ENCODE measurements at regions of chr4 and their contacts with region 1.

Region 1: DNA sequence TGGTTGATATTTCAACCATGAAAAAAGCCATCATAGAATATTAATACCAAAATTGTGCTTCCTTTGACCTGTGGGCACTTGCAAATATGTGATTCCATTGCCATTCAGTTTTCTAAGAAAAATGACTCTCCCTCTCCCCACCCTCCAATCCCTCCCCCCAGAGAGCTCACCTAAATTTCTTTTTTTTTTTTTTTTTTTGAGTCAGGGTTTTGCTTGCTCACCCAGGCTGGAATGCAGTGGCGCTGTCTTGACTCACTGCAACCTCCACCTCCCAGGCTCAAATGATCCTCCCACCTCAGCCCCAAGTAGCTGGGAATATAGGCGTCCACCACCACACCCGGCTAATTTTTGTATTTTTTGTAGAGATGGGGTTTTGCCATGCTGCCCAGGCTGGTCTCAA is 47.0 kb downstream of the SNX25 start:
- DNase-seq: peak in 1 of 2 experiments; percentile 39
- H3K4me3 ChIP-seq: no peak overlapping the region
- H3K27ac ChIP-seq: no peak overlapping the region
- H3K4me1 ChIP-seq: 0 out of 2 replicates have a peak, but pooled peaks cover 5% of the 10 kb centered on the region
- H3K27me3 ChIP-seq: no peaks in the 10 kb centered on the region
- CTCF ChIP-seq: no peak

Region 2: GRCh38 chr4:184583738-184584502 is 672.5 kb before region 1 on chr4:
- CTCF ChIA-PET with region 1: no interaction called
- POLR2A ChIA-PET with region 1: no interaction called
- intact Hi-C with region 1: no loop called
- DNase-seq: no peak
- H3K4me3 ChIP-seq: no peak overlapping the region
- H3K27ac ChIP-seq: no peak overlapping the region
- H3K4me1 ChIP-seq: no peaks in the 10 kb centered on the region
- H3K27me3 ChIP-seq: no peaks in the 10 kb centered on the region
- CTCF ChIP-seq: no peak

Region 3: DNA sequence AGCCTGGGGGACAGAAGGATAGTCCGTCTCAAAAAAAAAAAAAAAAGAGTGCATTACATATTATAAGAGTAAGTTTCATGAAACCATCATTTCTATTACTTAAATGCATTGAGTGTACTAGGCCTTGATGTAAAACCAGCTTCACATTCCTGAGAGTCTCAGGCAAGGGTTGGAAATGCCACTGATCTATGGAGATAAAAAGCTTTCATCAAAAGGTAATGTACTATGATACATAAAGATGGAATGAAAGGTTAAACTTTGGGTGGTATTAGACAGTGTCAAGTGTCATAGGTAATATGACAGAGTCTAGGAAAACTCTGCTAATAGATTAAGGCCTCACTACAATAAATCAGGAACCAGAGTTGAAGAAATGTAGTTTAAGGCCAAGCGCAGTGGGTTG is 60.0 kb before region 1 on chr4:
- CTCF ChIA-PET with region 1: interaction called, 11 read pairs
- POLR2A ChIA-PET with region 1: no interaction called
- intact Hi-C with region 1: no loop called
- DNase-seq: peak; percentile 26 to 88
- H3K4me3 ChIP-seq: no peak overlapping the region
- H3K27ac ChIP-seq: peak overlapping the region; percentile 53
- H3K4me1 ChIP-seq: peaks cover 29% of the 10 kb centered on the region
- H3K27me3 ChIP-seq: no peaks in the 10 kb centered on the region
- CTCF ChIP-seq: no peak

Region 4: GRCh38 chr4:185209031-185209851 is 47.2 kb before region 1 on chr4 and contains the start of gene SNX25:
- CTCF ChIA-PET with region 1: no interaction called
- POLR2A ChIA-PET with region 1: interaction called, 3 read pairs
- intact Hi-C with region 1: loop called (anchors 5 kb)
- DNase-seq: peak; percentile 75 to 93
- H3K4me3 ChIP-seq: peak within 1 kb of the TSS; percentile 80
- H3K27ac ChIP-seq: peak within 1 kb of the TSS; percentile 55
- H3K4me1 ChIP-seq: peaks cover 23% of the 10 kb centered on the region
- H3K27me3 ChIP-seq: no peaks in the 10 kb centered on the region
- CTCF ChIP-seq: no peak
- total RNA-seq, gene SNX25: 18.0 and 20.1 TPM in 2 replicates

Measured in PC-9 (cell line).